Dendritic cell treated with granulocyte-macrophage colony-stimulating factor and Interleukin-4, amounts not matched to agents 40 ng/mL and 50 ng/mL, for 4 days (primary cell): ENCODE measurements at regions of chr6 and their contacts with region 1.

Region 1: GRCh38 chr6:56955171-56956045 is 501 bp downstream of the BEND6 start:
- H3K4me3 Mint-ChIP-seq: peak overlapping the region; percentile 57
- H3K27ac Mint-ChIP-seq: no peak overlapping the region
- H3K4me1 Mint-ChIP-seq: peaks cover 17% of the 10 kb centered on the region
- H3K27me3 Mint-ChIP-seq: peaks cover 36% of the 10 kb centered on the region

Region 2: DNA sequence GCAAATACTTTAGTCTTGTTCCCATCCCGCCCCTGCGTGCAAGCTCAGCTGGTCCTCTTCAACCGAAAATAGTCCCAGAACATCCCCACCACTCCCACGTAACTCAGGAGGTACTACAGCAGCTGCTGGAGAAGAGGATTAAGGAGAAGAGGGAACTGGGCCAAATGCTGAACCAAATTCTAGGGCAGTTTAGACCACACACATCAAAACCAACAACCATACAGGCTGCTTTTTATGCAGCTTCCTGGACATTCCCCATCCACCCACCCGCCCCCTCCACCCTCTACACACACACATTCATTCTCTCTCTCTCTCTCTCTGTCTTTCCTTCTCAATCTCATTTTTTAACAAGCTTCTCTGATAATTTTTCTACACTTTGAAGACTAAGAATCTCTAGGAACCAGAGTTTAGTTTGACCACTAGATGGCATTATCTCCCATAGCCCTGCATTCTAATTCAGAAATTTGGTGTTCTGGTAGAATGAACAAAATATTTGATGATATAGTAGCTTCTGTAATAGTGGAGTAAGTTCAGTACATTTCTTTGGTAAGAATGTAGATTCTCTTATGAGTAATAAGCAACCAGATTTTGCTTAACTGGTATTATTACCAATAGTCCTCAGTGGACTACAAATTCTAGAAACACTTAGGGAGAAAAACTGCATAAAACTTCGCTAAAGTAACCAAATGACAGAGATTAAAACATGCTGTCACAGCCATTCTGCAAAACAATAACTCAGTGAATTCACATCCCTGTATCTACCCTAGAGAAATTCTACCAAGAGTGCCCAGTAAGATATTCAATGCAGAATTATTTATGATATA is 52.6 kb before region 1 on chr6:
- intact Hi-C with region 1: loop called (anchors 2 kb)
- H3K4me3 Mint-ChIP-seq: no peak overlapping the region
- H3K27ac Mint-ChIP-seq: no peak overlapping the region
- H3K4me1 Mint-ChIP-seq: no peaks in the 10 kb centered on the region
- H3K27me3 Mint-ChIP-seq: no peaks in the 10 kb centered on the region

Region 3: DNA sequence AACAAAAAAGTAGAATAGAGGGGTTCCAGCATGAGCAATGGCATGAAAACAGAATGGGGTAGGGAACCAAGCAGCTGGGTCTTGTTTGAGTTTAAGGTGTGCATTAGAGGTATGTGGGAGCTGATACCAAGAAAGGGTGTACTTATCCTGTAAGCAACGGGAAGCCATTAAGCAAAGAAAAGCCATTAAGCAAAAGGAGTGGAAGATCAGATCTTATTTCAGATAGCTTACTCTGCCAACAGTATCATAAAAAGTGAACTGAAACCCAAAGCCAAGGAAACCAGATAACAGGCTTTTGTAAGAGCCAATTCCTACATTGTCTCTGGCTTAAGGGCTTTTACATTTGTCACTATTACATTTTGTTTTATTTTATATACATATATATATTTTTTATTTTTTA is 21.8 kb before region 1 on chr6:
- intact Hi-C with region 1: loop called (anchors 1 kb)
- H3K4me3 Mint-ChIP-seq: peak overlapping the region; percentile 11
- H3K27ac Mint-ChIP-seq: peak overlapping the region; percentile 86
- H3K4me1 Mint-ChIP-seq: peaks cover 29% of the 10 kb centered on the region
- H3K27me3 Mint-ChIP-seq: no peaks in the 10 kb centered on the region

Region 4: GRCh38 chr6:57006131-57006737 is 50.8 kb after region 1 on chr6:
- intact Hi-C with region 1: no loop called
- H3K4me3 Mint-ChIP-seq: no peak overlapping the region
- H3K27ac Mint-ChIP-seq: no peak overlapping the region
- H3K4me1 Mint-ChIP-seq: no peaks in the 10 kb centered on the region
- H3K27me3 Mint-ChIP-seq: no peaks in the 10 kb centered on the region

Region 5: DNA sequence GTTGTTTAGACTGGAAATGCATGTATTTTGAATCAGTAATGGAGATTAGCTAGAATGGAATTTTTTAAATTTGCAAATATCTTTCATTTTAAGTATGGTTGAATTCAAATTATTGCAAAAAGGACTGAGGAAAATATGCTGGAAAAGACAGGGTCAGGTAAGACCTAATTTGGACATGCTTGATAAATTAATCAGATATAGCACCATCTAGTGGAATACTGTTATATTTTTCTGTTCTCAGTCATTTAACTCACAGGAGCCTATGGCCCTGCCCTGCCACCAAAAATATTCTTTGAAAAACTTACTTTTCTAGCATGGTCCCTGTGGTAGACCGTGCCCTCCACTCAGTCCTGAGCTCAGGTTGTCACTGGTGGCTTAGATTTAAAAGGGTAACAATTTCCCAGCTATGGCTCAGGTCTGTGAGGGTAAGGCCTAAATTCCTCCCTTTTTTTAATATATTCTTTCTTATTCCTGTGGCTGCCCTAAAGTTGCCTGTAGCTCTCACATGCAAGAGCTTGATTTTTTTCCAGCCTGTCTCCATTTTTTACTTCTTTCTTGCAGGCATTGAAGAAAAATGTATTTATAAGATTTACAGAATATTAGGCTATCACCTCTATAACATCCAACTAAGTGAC is 65.8 kb after region 1 on chr6:
- intact Hi-C with region 1: loop called (anchors 5 kb)
- H3K4me3 Mint-ChIP-seq: no peak overlapping the region
- H3K27ac Mint-ChIP-seq: no peak overlapping the region
- H3K4me1 Mint-ChIP-seq: no peaks in the 10 kb centered on the region
- H3K27me3 Mint-ChIP-seq: no peaks in the 10 kb centered on the region